ENCODE measurements at regions of chr10 and their contacts with region 1.

Region 1: GRCh38 chr10:3482200-3483138 is 302.5 kb downstream of the KLF6 start:
- DNase-seq: peak; percentile 17
- ATAC-seq: no peak
- H3K4me3 ChIP-seq: peak overlapping the region in 1 of 5 experiments; percentile 10
- H3K4me3 Mint-ChIP-seq: peak overlapping the region; percentile 26
- H3K27ac ChIP-seq: no peak overlapping the region
- H3K27ac Mint-ChIP-seq: peak overlapping the region; percentile 39
- H3K4me1 ChIP-seq: peaks cover 60 to 65% of the 10 kb centered on the region in 2 donors
- H3K4me1 Mint-ChIP-seq: peaks cover 62% of the 10 kb centered on the region
- H3K27me3 ChIP-seq: no peaks in the 10 kb centered on the region
- H3K27me3 Mint-ChIP-seq: no peaks in the 10 kb centered on the region
- CTCF ChIP-seq: no peak

Region 2: DNA sequence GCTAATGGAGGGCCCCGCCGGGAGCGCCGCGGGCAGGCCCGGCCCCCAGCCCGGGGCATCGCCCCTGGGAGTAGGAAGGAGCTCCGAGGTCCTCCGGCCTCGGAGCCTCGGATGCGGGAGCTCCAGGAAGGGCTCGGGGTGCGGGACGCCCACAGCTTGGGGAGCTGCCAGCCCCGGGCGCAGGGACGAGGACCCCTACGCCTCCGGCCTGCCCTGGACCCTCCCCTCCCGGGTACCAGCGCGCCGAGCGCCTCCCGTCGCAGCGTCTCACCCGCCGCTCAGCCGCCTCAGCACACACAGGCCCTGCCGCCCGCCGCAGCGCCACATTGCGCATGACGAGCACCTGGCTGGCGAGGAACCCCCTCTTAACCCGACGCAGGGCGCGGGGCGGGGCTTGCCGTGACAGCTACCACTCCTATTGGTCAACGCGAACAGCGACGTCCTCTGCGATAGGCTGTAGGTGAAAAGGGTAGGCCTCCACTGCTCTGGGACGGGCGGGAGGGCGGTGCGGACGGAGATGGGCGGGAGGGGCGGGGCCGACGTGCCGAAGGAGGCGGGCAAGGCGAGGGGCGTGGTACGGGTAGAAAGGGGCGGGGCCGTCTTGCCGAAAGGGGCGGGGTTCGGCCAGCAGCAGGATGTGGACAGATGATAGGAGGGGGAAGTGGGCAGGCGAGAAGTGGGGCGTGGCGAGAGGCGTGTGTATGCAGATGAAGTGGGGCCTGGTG is 309.9 kb before region 1 on chr10 and contains the start of gene PITRM1:
- CTCF ChIA-PET with region 1: no interaction called
- POLR2A ChIA-PET with region 1: no interaction called
- intact Hi-C with region 1: loop called (anchors 5 kb)
- DNase-seq: peak; percentile 100
- ATAC-seq: peak; percentile 90
- H3K4me3 ChIP-seq: peak within 1 kb of the TSS; percentile 64 to 90 (median 77)
- H3K4me3 Mint-ChIP-seq: peak within 1 kb of the TSS; percentile 88
- H3K27ac ChIP-seq: peak within 1 kb of the TSS; percentile 68 to 92
- H3K27ac Mint-ChIP-seq: peak within 1 kb of the TSS; percentile 84
- H3K4me1 ChIP-seq: peaks cover 7 to 17% of the 10 kb centered on the region in 2 donors
- H3K4me1 Mint-ChIP-seq: peaks cover 16% of the 10 kb centered on the region
- H3K27me3 ChIP-seq: no peaks in the 10 kb centered on the region
- H3K27me3 Mint-ChIP-seq: no peaks in the 10 kb centered on the region
- CTCF ChIP-seq: no peak
- total RNA-seq, gene PITRM1: 65.3 and 71.1 TPM in 2 replicates

Region 3: GRCh38 chr10:4131407-4132228 is 649.1 kb after region 1 on chr10:
- CTCF ChIA-PET with region 1: interaction called, 3 read pairs
- POLR2A ChIA-PET with region 1: no interaction called
- intact Hi-C with region 1: loop called (anchors 10 kb)
- DNase-seq: peak; percentile 79
- ATAC-seq: peak; percentile 71
- H3K4me3 ChIP-seq: peak overlapping the region in 4 of 5 experiments; percentile 0 to 51 (median 32)
- H3K4me3 Mint-ChIP-seq: no peak overlapping the region
- H3K27ac ChIP-seq: peak overlapping the region; percentile 21 to 71
- H3K27ac Mint-ChIP-seq: no peak overlapping the region
- H3K4me1 ChIP-seq: peaks cover 70 to 71% of the 10 kb centered on the region in 2 donors
- H3K4me1 Mint-ChIP-seq: peaks cover 45% of the 10 kb centered on the region
- H3K27me3 ChIP-seq: no peaks in the 10 kb centered on the region
- H3K27me3 Mint-ChIP-seq: no peaks in the 10 kb centered on the region
- CTCF ChIP-seq: no peak

Region 4: DNA sequence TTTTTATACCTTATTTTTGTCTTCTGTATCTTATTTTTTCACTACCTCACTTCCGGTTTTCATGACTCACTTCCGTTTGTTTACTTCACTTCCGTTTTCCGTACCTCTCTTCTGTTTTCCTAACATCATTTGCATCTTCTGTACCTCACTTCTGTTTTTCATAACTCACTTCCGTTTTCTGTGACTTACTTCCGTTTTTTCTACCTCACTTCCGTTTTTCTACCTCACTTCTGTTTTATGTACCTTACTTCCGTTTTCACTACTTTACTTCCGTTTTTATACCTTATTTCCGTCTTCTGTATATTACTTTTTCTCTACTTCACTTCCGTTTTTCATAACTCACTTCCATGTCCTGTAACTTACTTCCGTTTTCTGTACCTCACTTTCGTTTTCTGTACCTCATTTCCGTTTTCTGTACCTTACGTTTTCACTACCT is 851.0 kb after region 1 on chr10:
- CTCF ChIA-PET with region 1: no interaction called
- POLR2A ChIA-PET with region 1: no interaction called
- intact Hi-C with region 1: loop called (anchors 5 kb)
- DNase-seq: no peak
- ATAC-seq: peak; percentile 46
- H3K4me3 ChIP-seq: no peak overlapping the region
- H3K4me3 Mint-ChIP-seq: no peak overlapping the region
- H3K27ac ChIP-seq: peak overlapping the region; percentile 84 to 96
- H3K27ac Mint-ChIP-seq: no peak overlapping the region
- H3K4me1 ChIP-seq: peaks cover 3% of the 10 kb centered on the region in 2 donors
- H3K4me1 Mint-ChIP-seq: no peaks in the 10 kb centered on the region
- H3K27me3 ChIP-seq: no peaks in the 10 kb centered on the region
- H3K27me3 Mint-ChIP-seq: no peaks in the 10 kb centered on the region
- CTCF ChIP-seq: peak; percentile 5

Measured in B cell (primary cell).